WTC11 (cell line): ENCODE measurements at regions of chr2 and their contacts with region 1.

Region 1: DNA sequence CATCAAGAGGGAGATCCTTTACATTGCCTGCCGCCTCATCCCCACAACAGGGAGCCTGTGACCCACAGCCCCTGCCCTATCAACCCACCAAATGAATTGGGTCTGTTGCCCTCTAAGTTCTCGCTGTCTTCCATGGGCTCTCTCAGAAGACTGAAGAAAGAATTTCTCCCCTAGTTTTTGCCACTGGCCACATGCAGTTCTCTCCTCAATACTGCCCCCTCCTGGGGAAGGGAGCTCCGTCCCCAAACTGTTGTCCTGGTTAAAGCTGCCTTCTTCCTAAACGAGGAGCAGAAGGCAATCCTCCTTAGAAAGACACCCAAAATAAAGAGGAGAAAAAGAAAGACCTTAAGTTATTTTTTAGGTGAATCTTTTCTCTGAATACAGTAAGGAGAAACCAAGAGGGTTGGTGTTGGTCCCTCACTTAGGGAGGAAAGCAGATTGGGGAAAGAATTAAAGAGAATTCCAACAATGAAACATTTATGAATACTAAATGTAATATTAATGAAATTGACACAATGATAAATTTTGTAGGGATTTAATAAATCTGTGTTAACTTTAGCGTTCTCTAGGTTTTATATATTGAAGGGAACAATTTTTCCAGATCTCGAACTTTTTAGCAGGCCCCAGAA is 31.1 kb upstream of the SATB2 start:
- DNase-seq: peak; percentile 80
- ATAC-seq: peak; percentile 82
- H3K4me3 Mint-ChIP-seq: no peak overlapping the region
- H3K27ac Mint-ChIP-seq: no peak overlapping the region
- H3K4me1 Mint-ChIP-seq: no peaks in the 10 kb centered on the region
- H3K27me3 Mint-ChIP-seq: no peaks in the 10 kb centered on the region
- CTCF ChIP-seq: peak; percentile 83

Region 2: GRCh38 chr2:198309673-198310280 is 1179.1 kb before region 1 on chr2:
- CTCF ChIA-PET with region 1: interaction called, 20 read pairs
- POLR2A ChIA-PET with region 1: no interaction called
- DNase-seq: peak; percentile 53
- ATAC-seq: peak; percentile 40; the same call in 1 of the 2 replicates
- H3K4me3 Mint-ChIP-seq: no peak overlapping the region
- H3K27ac Mint-ChIP-seq: no peak overlapping the region
- H3K4me1 Mint-ChIP-seq: peaks cover 20% of the 10 kb centered on the region
- H3K27me3 Mint-ChIP-seq: no peaks in the 10 kb centered on the region
- CTCF ChIP-seq: peak; percentile 73

Region 3: DNA sequence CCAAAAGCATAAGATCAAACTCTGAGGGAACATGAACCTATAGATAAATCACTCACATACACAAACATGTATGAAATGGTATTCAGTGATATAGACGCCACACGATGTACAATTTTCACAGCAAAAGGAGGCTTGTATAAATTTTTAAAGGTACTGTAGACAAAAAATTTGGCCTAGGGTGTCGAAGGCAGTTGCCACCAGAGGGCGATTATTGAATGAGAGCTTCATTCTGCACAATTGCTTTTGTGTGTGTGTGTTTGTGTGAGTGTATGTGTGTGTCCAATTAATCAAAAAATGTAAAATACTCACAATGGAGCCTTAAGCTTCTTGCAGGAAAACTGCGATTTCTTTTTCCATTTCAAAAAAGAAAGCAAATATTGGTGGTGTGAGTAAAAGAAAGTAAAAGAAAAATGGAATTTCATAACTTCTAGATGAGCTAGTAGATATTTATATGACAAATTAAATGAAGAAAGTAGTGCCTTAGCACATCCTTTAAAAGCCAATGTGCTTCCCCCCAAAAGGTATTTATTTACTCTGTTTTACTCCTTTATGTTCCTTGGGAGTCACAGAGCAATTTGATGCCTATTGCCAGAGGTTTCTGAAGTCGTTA is 831.3 kb before region 1 on chr2:
- CTCF ChIA-PET with region 1: interaction called, 11 read pairs
- POLR2A ChIA-PET with region 1: no interaction called
- DNase-seq: peak; percentile 31
- ATAC-seq: no peak
- H3K4me3 Mint-ChIP-seq: no peak overlapping the region
- H3K27ac Mint-ChIP-seq: no peak overlapping the region
- H3K4me1 Mint-ChIP-seq: no peaks in the 10 kb centered on the region
- H3K27me3 Mint-ChIP-seq: no peaks in the 10 kb centered on the region
- CTCF ChIP-seq: peak; percentile 55

Region 4: DNA sequence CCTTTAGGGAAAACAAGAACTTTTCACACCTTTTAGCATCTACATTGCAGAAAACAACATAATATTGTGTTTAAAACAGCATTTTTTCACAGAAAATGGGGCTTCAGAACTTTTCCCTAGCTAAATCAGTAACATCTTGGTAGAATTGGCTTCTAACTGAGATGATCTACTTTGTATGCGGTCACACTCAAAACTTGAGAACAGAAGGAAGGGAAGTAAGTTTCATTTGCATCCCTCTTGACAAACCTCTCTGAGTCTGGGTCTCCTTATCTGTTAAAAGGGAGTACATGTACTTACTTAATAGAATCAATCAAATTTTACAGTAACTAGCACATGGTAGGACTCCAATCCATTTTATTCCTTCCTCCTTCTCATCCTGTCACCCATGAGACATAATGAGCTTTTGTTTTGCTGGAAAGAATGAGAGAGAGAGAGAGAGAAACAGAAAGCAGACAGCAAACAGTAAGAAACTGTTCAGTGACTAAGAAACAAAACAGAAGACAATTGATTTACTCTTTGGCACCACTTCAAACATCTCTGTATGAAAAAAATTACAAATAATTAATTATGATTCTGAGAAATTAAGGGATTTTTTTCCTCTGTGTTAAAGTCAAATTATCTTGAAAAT is 418.4 kb before region 1 on chr2:
- CTCF ChIA-PET with region 1: no interaction called
- POLR2A ChIA-PET with region 1: no interaction called
- DNase-seq: no peak
- ATAC-seq: no peak
- H3K4me3 Mint-ChIP-seq: no peak overlapping the region
- H3K27ac Mint-ChIP-seq: no peak overlapping the region
- H3K4me1 Mint-ChIP-seq: peaks cover 8% of the 10 kb centered on the region; the same call in 1 of the 2 replicates
- H3K27me3 Mint-ChIP-seq: no peaks in the 10 kb centered on the region
- CTCF ChIP-seq: no peak

Region 5: GRCh38 chr2:199378948-199379650 is 109.8 kb before region 1 on chr2:
- CTCF ChIA-PET with region 1: no interaction called
- POLR2A ChIA-PET with region 1: no interaction called
- DNase-seq: no peak
- ATAC-seq: no peak
- H3K4me3 Mint-ChIP-seq: no peak overlapping the region
- H3K27ac Mint-ChIP-seq: no peak overlapping the region
- H3K4me1 Mint-ChIP-seq: peaks cover 7% of the 10 kb centered on the region; the same call in 1 of the 2 replicates
- H3K27me3 Mint-ChIP-seq: no peaks in the 10 kb centered on the region
- CTCF ChIP-seq: no peak

Region 6: DNA sequence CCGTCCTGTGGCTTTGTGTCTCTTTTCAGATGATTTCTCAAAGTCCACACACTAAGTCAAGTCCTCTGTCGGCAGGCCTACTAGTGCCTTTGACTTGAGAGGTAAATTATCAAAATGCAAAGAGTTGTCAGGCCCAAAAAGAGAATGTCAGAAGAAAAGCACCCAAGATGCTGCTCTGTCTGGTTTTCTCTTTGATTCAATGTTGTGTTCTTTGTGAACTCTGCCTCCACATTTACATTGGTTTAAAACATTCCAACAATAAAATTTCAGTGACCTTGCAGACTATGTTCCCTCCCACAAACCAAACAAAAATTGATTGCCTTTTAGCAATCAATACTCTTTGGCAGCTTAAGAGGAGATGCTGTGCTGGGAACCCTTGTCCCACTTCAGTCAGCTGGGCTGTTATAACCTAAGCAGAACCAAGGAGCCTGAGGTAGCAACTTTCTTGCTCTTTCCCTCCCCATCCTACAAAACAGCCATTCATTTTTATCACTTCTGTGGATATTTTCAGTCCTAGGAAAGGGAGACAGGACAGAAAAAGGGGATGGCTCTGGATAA is 11.5 kb before region 1 on chr2:
- CTCF ChIA-PET with region 1: interaction called, 136 read pairs
- POLR2A ChIA-PET with region 1: no interaction called
- DNase-seq: no peak
- ATAC-seq: no peak
- H3K4me3 Mint-ChIP-seq: no peak overlapping the region
- H3K27ac Mint-ChIP-seq: no peak overlapping the region
- H3K4me1 Mint-ChIP-seq: 0 out of 2 replicates have a peak, but pooled peaks cover 3% of the 10 kb centered on the region
- H3K27me3 Mint-ChIP-seq: peaks cover 12% of the 10 kb centered on the region
- CTCF ChIP-seq: no peak

Region 7: DNA sequence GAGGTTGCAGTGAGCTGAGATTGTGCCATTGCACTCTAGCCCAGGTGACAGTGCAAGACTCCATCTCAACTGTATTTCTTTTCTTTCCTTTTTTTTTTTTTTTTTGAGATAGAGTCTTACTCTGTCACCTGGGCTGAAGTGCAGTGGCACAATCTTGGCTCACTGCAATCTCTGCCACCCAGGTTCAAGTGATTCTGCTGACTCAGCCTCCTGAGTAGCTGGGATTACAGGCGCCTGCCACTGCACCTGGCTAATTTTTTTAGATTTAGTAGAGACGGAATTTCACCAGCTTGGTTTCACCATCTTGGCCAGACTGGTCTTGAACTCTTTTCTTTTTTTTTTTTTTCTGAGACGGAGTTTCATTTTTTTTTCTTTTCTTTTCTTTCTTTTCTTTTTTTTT is 10.1 kb after region 1 on chr2:
- CTCF ChIA-PET with region 1: interaction called, 14 read pairs
- POLR2A ChIA-PET with region 1: interaction called, 3 read pairs
- DNase-seq: no peak
- ATAC-seq: no peak
- H3K4me3 Mint-ChIP-seq: no peak overlapping the region
- H3K27ac Mint-ChIP-seq: no peak overlapping the region
- H3K4me1 Mint-ChIP-seq: peaks cover 6% of the 10 kb centered on the region
- H3K27me3 Mint-ChIP-seq: no peaks in the 10 kb centered on the region
- CTCF ChIP-seq: no peak